ENCODE measurements at regions of chr20 and their contacts with region 1.

Region 1: GRCh38 chr20:32762149-32762753 is at the start of gene DNMT3B:
- DNase-seq: peak; percentile 92
- H3K4me3 Mint-ChIP-seq: peak within 1 kb of the TSS; percentile 93
- H3K27ac Mint-ChIP-seq: peak within 1 kb of the TSS; percentile 86
- H3K4me1 Mint-ChIP-seq: peaks cover 27% of the 10 kb centered on the region
- H3K27me3 Mint-ChIP-seq: no peaks in the 10 kb centered on the region
- CTCF ChIP-seq: no peak
- total RNA-seq, gene DNMT3B: 8.4 and 10.8 TPM in 2 replicates

Region 2: DNA sequence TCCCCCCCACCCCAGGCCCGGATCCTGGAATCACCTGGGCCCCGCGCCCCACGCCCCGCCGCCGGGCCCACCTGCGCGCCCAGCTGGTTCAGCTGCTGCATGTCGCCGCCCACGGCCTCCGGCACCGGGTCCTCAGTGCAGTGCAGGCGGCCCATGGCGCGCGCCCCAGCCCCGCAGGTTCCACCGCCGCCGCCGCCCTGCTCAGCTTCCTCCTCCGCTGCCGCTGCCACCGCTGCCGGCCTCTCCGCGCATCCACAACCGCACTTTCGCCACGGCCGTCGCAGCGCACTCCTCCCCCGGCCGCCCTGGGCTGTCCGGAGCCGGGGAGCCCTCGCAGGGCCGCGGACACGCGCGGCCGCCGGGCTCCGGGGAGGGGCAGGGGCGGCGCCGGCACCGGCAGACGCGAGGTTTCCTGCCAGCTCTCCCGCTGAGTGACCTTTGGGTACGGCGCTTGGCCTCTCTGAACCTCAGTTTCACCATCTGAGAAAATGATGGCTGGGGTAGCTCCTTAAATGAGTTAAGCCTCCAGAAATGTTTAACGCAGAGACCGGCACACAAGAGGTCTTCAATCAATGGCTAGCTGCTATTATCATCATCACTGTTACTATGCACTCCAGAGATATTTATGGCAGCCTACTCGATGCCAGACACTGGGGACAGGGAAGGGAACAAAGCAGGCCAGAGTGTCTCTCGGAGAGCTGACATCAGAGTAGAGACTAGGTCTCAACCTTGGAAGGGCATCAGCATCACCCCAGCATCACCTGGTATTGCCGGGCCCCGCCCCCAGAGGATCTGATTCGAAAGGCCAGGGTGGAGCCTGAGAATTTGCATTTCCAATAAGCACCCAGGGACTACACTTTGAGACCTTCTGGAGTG is 18.8 kb before region 1 on chr20 and contains the start of gene COMMD7:
- CTCF ChIA-PET with region 1: interaction called, 15 read pairs
- intact Hi-C with region 1: no loop called
- DNase-seq: peak; percentile 76
- H3K4me3 Mint-ChIP-seq: peak within 1 kb of the TSS; percentile 94
- H3K27ac Mint-ChIP-seq: peak within 1 kb of the TSS; percentile 81
- H3K4me1 Mint-ChIP-seq: peaks cover 23% of the 10 kb centered on the region
- H3K27me3 Mint-ChIP-seq: no peaks in the 10 kb centered on the region
- CTCF ChIP-seq: no peak
- total RNA-seq, gene COMMD7: 51.0 and 56.0 TPM in 2 replicates

Region 3: GRCh38 chr20:32823078-32823477 is 60.8 kb after region 1 on chr20:
- CTCF ChIA-PET with region 1: no interaction called
- intact Hi-C with region 1: no loop called
- DNase-seq: peak; percentile 26
- H3K4me3 Mint-ChIP-seq: no peak overlapping the region
- H3K27ac Mint-ChIP-seq: peak overlapping the region; percentile 9
- H3K4me1 Mint-ChIP-seq: peaks cover 48% of the 10 kb centered on the region
- H3K27me3 Mint-ChIP-seq: no peaks in the 10 kb centered on the region
- CTCF ChIP-seq: no peak